Left colon (tissue), 2 donors: ENCODE measurements at regions of chr16 and their contacts with region 1.

Region 1: GRCh38 chr16:74862741-74863244 is 88.2 kb upstream of the FA2H start:
- DNase-seq: no peak
- ATAC-seq: peak; percentile 74

Region 2: GRCh38 chr16:74521691-74522090 is 341.1 kb before region 1 on chr16:
- intact Hi-C with region 1: no loop called
- DNase-seq: no peak
- ATAC-seq: no peak

Region 3: DNA sequence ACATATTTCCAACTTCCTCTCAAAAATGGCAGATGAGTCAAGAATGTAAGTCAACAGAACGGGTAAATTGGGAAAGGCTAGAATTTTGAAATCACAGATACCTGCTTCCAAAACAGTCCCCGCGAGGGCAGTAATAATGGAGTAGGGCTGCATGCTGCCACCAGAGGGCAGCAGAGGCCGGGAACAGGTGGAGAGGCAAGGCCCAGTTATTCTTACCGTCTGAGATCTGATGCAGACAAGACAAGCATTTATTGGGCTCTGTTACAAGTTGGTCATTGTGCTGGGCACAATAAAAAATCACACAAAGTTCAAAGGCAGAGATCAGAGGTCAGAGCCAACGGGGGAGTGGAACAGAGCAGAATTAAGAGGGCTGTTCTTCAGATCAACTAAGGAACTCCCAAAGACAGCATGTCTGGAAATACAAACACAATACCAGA is 153.3 kb before region 1 on chr16:
- intact Hi-C with region 1: loop called (anchors 5 to 10 kb)
- DNase-seq: peak; percentile 48 to 83
- ATAC-seq: peak; percentile 94

Region 4: GRCh38 chr16:74718741-74719610 is 143.8 kb before region 1 on chr16:
- intact Hi-C with region 1: loop called in 1 of 2 experiments (anchors 10 kb)
- DNase-seq: no peak
- ATAC-seq: no peak

Region 5: GRCh38 chr16:74813109-74813641 is 49.6 kb before region 1 on chr16:
- intact Hi-C with region 1: loop called in 1 of 2 experiments (anchors 5 kb)
- DNase-seq: peak; percentile 73 to 90
- ATAC-seq: peak; percentile 100